Naive thymus-derived CD4-positive, alpha-beta T cell (primary cell): ENCODE measurements at regions of chr7 and their contacts with region 1.

Region 1: GRCh38 chr7:142313528-142313927 is 55.7 kb upstream of the PRSS58 start:
- DNase-seq: peak in 6 of 9 donors; percentile 34 to 74 (median 42)
- ATAC-seq: peak; percentile 77
- H3K4me3 ChIP-seq: peak overlapping the region; percentile 14
- H3K4me3 Mint-ChIP-seq: peak overlapping the region; percentile 25 to 75 (median 64)
- H3K27ac ChIP-seq: no peak overlapping the region
- H3K27ac Mint-ChIP-seq: peak overlapping the region in 8 of 9 donors; percentile 13 to 91 (median 74)
- H3K4me1 ChIP-seq: peaks cover 9% of the 10 kb centered on the region in 2 donors
- H3K4me1 Mint-ChIP-seq: peaks cover 9 to 29% (median 25%) of the 10 kb centered on the region in 7 donors
- H3K27me3 ChIP-seq: no peaks in the 10 kb centered on the region
- H3K27me3 Mint-ChIP-seq: peaks cover 0 to 58% (median 12%) of the 10 kb centered on the region in 5 donors

Region 2: DNA sequence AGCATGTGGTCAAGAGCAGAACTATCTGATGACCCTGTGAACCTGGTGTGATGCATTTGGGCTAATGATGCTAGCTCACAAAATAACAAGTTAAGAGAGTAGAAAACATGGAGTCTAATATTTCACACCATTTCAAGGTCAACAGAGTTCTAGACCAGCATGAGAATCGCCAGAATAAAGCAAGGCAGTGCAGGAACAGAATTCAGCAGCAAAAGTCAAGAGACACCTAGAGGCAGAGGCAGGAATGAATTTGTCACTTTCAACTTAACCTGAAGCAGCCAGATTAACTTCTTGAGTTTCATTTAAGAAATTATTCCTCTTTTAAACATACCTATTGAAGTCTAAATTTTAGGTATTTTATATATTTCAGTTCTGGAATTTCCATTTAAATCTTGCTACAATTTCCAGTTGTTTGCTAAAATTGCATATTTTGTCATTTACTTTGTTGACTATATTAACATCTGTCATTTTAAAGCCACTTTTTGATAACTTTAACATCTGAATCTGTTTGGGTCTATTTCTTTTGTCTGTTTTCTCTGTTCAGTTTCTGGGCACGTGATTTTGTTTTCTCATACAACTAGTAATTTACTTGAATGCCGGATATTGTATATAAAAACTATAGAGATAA is 11.5 kb before region 1 on chr7:
- CTCF ChIA-PET with region 1: interaction called, 32 read pairs
- POLR2A ChIA-PET with region 1: interaction called, 3 read pairs
- intact Hi-C with region 1: no loop called
- DNase-seq: peak in 1 of 9 donors; percentile 34
- ATAC-seq: no peak
- H3K4me3 ChIP-seq: no peak overlapping the region
- H3K4me3 Mint-ChIP-seq: peak overlapping the region in 2 of 10 donors; percentile 17 to 49
- H3K27ac ChIP-seq: no peak overlapping the region
- H3K27ac Mint-ChIP-seq: no peak overlapping the region
- H3K4me1 ChIP-seq: peaks cover 0 to 28% of the 10 kb centered on the region in 2 donors
- H3K4me1 Mint-ChIP-seq: peaks cover 7 to 52% (median 35%) of the 10 kb centered on the region in 7 donors
- H3K27me3 ChIP-seq: no peaks in the 10 kb centered on the region
- H3K27me3 Mint-ChIP-seq: peaks cover 4 to 25% (median 16%) of the 10 kb centered on the region in 5 donors